CD8-positive, alpha-beta T cell (primary cell): ENCODE measurements at regions of chr9 and their contacts with region 1.

Region 1: DNA sequence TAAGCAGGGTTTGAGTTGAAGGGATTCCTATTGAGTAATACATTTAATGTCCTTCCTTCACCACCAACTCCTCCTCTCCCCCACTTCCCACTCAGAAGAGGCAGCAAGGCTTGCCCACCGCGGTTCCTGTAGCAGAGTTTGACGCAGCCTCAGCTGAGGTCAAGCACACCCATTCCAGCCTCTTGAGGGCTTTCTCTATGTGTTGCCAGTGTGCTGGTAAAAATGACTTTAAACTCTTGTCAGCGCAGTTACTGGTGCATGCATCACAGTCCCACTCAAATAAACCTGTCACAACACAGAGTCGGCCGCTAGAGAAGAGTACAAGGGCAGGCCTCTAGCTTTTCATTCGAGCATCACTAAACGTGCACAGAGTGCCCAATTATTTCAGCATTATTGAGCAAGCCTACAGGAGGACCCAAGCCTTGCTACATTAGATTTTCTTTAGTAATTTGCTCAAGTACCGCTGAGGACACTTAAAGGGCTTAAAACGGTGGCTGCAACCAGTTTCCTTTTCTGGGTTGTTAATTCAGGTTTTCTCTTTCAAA is 79.6 kb downstream of the TLE4 start:
- DNase-seq: no peak
- ATAC-seq: no peak
- H3K4me3 ChIP-seq: no peak overlapping the region
- H3K4me3 Mint-ChIP-seq: no peak overlapping the region
- H3K27ac ChIP-seq: no peak overlapping the region
- H3K27ac Mint-ChIP-seq: no peak overlapping the region
- H3K4me1 ChIP-seq: no peaks in the 10 kb centered on the region
- H3K4me1 Mint-ChIP-seq: peaks cover 18% of the 10 kb centered on the region
- H3K27me3 ChIP-seq: no peaks in the 10 kb centered on the region
- H3K27me3 Mint-ChIP-seq: no peaks in the 10 kb centered on the region
- CTCF ChIP-seq: no peak

Region 2: GRCh38 chr9:79613145-79613544 is 38.2 kb before region 1 on chr9:
- CTCF ChIA-PET with region 1: no interaction called
- POLR2A ChIA-PET with region 1: no interaction called
- intact Hi-C with region 1: no loop called
- DNase-seq: no peak
- ATAC-seq: no peak
- H3K4me3 ChIP-seq: no peak overlapping the region
- H3K4me3 Mint-ChIP-seq: no peak overlapping the region
- H3K27ac ChIP-seq: no peak overlapping the region
- H3K27ac Mint-ChIP-seq: no peak overlapping the region
- H3K4me1 ChIP-seq: peaks cover 6% of the 10 kb centered on the region
- H3K4me1 Mint-ChIP-seq: peaks cover 71% of the 10 kb centered on the region
- H3K27me3 ChIP-seq: no peaks in the 10 kb centered on the region
- H3K27me3 Mint-ChIP-seq: no peaks in the 10 kb centered on the region
- CTCF ChIP-seq: no peak

Region 3: DNA sequence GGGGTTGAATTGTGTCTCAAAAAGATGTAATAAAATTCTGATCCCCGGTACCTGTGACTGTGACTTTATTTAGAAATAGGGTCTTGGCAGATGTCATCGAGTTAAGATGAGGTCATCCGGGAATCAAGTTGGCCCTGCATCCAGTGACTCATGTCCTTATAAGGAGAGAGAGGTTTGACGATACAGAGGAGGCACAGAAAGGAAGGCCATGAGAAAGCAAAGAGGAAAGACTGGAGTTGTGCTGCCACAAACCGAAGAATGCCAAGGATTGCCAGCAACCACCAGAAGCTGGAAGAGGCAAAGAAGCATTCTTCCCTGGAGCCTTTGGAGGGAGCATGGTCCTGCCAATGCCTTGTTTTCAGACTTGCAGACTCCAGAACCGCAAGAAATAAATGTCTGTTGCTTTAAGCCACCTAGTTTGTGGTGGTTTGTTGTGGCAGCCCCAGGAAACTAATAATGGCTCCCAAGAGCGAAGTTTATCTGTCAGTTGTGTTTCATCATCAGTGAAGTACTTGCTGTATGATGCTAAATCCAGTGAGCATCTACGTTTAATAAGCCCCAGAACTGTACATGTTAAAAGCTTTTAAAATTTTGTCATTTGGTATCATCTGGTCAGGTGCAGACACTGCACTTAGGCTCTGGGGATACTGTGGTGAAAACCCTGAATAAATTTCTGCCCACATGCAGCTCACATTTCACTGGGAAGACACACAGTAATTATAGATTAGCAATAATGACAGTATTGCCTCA is 35.2 kb after region 1 on chr9:
- CTCF ChIA-PET with region 1: no interaction called
- POLR2A ChIA-PET with region 1: no interaction called
- intact Hi-C with region 1: loop called in 1 of 2 experiments (anchors 5 kb)
- DNase-seq: no peak
- ATAC-seq: no peak
- H3K4me3 ChIP-seq: no peak overlapping the region
- H3K4me3 Mint-ChIP-seq: no peak overlapping the region
- H3K27ac ChIP-seq: no peak overlapping the region
- H3K27ac Mint-ChIP-seq: no peak overlapping the region
- H3K4me1 ChIP-seq: peaks cover 11% of the 10 kb centered on the region
- H3K4me1 Mint-ChIP-seq: peaks cover 72% of the 10 kb centered on the region
- H3K27me3 ChIP-seq: no peaks in the 10 kb centered on the region
- H3K27me3 Mint-ChIP-seq: no peaks in the 10 kb centered on the region
- CTCF ChIP-seq: no peak

Region 4: GRCh38 chr9:79801459-79801858 is 150.1 kb after region 1 on chr9:
- CTCF ChIA-PET with region 1: no interaction called
- POLR2A ChIA-PET with region 1: no interaction called
- intact Hi-C with region 1: no loop called
- DNase-seq: no peak
- ATAC-seq: no peak
- H3K4me3 ChIP-seq: no peak overlapping the region
- H3K4me3 Mint-ChIP-seq: no peak overlapping the region
- H3K27ac ChIP-seq: no peak overlapping the region
- H3K27ac Mint-ChIP-seq: no peak overlapping the region
- H3K4me1 ChIP-seq: no peaks in the 10 kb centered on the region
- H3K4me1 Mint-ChIP-seq: no peaks in the 10 kb centered on the region
- H3K27me3 ChIP-seq: no peaks in the 10 kb centered on the region
- H3K27me3 Mint-ChIP-seq: no peaks in the 10 kb centered on the region
- CTCF ChIP-seq: no peak